SK-N-SH (cell line): ENCODE measurements at regions of chr12 and their contacts with region 1.

Region 1: DNA sequence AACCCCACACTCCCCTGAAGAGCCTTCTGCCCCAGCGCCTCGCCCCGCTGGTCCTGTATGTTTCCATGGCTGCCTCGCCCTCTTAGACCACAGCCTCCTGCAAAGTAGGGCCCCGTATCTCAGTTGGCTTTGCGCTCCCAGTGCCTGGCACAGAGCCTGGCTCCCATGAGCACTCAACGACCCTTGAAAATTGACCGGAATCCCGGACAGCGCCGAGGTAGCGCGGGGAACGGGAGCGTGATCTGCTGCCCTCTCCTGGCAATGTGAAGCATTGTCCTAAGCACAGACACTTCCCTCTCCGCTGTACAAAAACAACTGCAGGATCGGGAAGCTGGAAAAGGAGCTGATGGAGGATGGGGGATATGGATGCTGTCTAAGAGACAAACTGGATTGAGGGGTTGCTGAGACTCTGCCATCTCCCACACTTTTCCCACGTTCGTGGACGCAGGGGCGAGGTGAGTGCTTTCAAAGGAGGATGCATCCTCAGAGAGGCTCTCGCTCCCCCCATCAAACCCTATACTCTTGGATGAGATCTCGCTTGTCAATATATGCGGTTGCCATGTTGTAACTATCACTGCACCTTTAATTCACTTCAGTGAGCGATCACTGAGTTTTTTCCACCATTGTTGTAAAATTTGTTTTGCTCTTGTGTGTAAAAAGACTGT is 10.7 kb upstream of the FKBP4 start:
- DNase-seq: peak; percentile 83
- H3K4me3 ChIP-seq: peak overlapping the region in 1 of 2 experiments; percentile 24; a peak in 1 of 4 replicates
- H3K27ac ChIP-seq: no peak overlapping the region
- H3K4me1 ChIP-seq: peaks cover 0 to 4% of the 10 kb centered on the region in 2 experiments; a peak in 1 of 4 replicates
- H3K27me3 ChIP-seq: no peaks in the 10 kb centered on the region; the same call in 1 of the 2 replicates
- CTCF ChIP-seq: peak; percentile 84
- EP300 ChIP-seq: no peak
- RAD21 ChIP-seq: peak; percentile 74

Region 2: DNA sequence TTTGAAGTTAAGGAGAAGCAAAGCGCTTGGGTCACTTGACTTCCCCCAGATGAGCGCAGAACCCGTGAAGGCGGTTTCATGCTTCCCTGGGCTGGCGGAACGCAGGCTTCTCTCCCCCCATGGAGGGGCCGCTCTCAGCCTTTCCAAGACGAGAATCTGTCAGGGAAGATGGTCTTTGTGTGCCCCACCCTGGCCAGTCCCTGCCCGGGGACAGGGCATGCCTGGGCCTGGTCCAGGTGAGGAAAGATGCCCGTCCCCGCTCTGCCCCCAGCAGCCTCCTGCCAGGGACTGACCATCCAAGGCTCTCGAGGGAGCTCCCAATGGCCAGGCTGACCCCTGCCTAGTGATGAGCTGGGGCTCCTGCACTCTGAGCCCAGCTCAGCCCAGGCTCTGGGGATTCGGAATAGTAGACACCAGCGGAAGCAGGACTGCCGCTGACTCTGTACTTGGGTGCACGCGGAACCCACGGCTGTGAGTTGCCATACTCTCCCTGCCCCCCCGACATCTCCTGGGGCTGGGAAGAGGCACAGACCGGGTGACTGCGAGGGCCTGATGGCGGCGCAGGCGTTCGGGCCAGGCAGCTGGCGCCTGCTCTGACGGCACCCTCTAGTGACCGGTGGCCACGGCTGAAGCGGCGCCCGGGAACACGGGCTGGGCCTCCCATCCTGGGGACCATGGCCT is 131.5 kb before region 1 on chr12:
- CTCF ChIA-PET with region 1: no interaction called
- POLR2A ChIA-PET with region 1: no interaction called
- DNase-seq: peak; percentile 41
- H3K4me3 ChIP-seq: no peak overlapping the region
- H3K27ac ChIP-seq: no peak overlapping the region
- H3K4me1 ChIP-seq: no peaks in the 10 kb centered on the region; a peak in 1 of 4 replicates
- H3K27me3 ChIP-seq: no peaks in the 10 kb centered on the region
- CTCF ChIP-seq: peak; percentile 15; the same call in 1 of the 2 replicates
- EP300 ChIP-seq: no peak
- RAD21 ChIP-seq: peak; percentile 21; the same call in 1 of the 2 replicates

Region 3: GRCh38 chr12:2697057-2697800 is 86.8 kb before region 1 on chr12:
- CTCF ChIA-PET with region 1: no interaction called
- POLR2A ChIA-PET with region 1: no interaction called
- DNase-seq: no peak
- H3K4me3 ChIP-seq: no peak overlapping the region
- H3K27ac ChIP-seq: no peak overlapping the region
- H3K4me1 ChIP-seq: no peaks in the 10 kb centered on the region
- H3K27me3 ChIP-seq: no peaks in the 10 kb centered on the region
- CTCF ChIP-seq: no peak
- EP300 ChIP-seq: no peak
- RAD21 ChIP-seq: no peak

Region 4: GRCh38 chr12:2733477-2734355 is 50.4 kb before region 1 on chr12:
- CTCF ChIA-PET with region 1: interaction called, 80 read pairs
- POLR2A ChIA-PET with region 1: no interaction called
- DNase-seq: no peak
- H3K4me3 ChIP-seq: no peak overlapping the region
- H3K27ac ChIP-seq: no peak overlapping the region
- H3K4me1 ChIP-seq: no peaks in the 10 kb centered on the region
- H3K27me3 ChIP-seq: peaks cover 32% of the 10 kb centered on the region
- CTCF ChIP-seq: no peak
- EP300 ChIP-seq: no peak
- RAD21 ChIP-seq: no peak

Region 5: DNA sequence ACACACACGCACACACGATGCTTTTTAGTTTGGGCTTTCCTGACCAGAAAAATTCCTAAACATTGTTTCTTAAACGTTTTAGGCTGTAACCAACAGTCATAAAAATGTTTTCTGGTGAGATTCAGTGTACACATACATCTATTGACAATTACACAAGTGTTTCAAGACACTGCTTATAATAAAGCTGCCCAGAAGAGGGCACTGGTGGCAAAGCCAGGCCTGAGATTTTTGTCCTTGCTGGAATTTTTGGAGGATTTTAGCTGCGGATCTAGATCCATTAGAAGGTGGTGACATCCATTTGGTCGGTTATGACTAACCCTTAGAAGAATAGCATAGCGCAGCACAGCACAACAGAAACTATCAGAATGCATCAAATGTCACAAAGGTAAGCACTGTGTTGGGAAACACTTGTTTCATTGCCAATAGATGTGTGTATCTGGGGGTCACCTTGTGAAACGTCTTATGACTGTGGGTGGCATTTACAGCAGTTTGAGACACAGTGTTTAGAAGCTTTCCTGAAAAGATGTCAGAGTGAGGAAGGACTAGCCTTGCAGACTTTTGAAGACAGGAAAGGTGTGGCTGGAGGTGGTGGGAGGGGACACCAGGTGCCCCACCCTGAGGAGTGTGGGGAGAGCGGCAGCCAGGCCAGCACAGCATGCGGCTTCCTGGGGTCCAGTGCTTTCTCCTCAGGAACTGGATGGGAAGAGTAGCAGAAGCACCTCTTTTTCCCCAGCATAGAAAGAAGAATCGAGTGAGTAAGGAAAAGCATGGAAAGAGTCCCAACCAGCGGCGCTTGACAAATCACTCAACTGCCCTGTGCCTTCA is 44.0 kb before region 1 on chr12:
- CTCF ChIA-PET with region 1: interaction called, 80 read pairs
- POLR2A ChIA-PET with region 1: no interaction called
- DNase-seq: peak; percentile 46
- H3K4me3 ChIP-seq: no peak overlapping the region
- H3K27ac ChIP-seq: no peak overlapping the region
- H3K4me1 ChIP-seq: no peaks in the 10 kb centered on the region
- H3K27me3 ChIP-seq: peaks cover 22% of the 10 kb centered on the region
- CTCF ChIP-seq: peak; percentile 73
- EP300 ChIP-seq: no peak
- RAD21 ChIP-seq: peak; percentile 86

Region 6: DNA sequence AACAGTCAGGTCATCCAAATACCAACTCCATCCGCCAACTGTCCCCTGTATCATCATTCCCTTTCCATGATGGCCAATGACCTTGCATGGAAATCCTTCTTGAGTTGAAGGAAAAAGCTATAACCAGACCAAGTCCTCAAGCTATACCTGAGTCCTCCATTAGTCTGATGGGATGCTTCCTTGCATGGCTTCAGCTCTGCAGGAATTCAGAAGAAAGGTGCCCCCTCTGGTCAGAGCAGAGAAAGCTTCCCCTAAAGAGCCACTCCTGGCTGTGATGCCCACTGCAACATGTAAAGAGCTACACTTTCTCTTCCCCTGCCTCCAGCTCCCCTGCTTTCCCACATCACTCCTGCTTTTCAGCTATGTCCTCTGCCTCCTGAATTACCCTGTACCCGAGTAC is 32.4 kb before region 1 on chr12:
- CTCF ChIA-PET with region 1: interaction called, 15 read pairs
- POLR2A ChIA-PET with region 1: no interaction called
- DNase-seq: peak; percentile 32
- H3K4me3 ChIP-seq: no peak overlapping the region
- H3K27ac ChIP-seq: no peak overlapping the region
- H3K4me1 ChIP-seq: peaks cover 0 to 3% of the 10 kb centered on the region in 2 experiments; a peak in 2 of 4 replicates
- H3K27me3 ChIP-seq: no peaks in the 10 kb centered on the region; the same call in 1 of the 2 replicates
- CTCF ChIP-seq: no peak
- EP300 ChIP-seq: no peak
- RAD21 ChIP-seq: no peak

Region 7: DNA sequence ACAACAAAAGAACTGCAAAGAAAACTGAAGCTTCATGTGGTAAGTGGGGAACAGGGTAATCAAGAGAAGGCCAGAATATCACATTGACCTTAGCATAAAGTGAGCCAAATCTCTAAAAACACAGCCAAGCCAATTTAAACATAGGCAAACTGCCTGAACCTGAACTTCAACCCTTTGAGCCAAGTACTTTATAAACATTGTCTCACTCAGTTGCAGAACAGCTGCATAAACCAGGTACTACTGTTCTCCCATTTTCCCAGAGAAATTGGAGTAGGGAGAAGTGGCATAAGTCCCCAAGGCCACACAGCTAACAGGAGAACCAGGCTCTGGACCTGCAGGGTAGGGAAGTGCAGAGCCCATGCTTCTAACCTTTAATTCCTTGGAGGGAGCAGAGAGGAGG is 19.7 kb before region 1 on chr12:
- CTCF ChIA-PET with region 1: interaction called, 18 read pairs
- POLR2A ChIA-PET with region 1: no interaction called
- DNase-seq: no peak
- H3K4me3 ChIP-seq: no peak overlapping the region
- H3K27ac ChIP-seq: no peak overlapping the region
- H3K4me1 ChIP-seq: no peaks in the 10 kb centered on the region
- H3K27me3 ChIP-seq: no peaks in the 10 kb centered on the region
- CTCF ChIP-seq: no peak
- EP300 ChIP-seq: no peak
- RAD21 ChIP-seq: no peak

Region 8: DNA sequence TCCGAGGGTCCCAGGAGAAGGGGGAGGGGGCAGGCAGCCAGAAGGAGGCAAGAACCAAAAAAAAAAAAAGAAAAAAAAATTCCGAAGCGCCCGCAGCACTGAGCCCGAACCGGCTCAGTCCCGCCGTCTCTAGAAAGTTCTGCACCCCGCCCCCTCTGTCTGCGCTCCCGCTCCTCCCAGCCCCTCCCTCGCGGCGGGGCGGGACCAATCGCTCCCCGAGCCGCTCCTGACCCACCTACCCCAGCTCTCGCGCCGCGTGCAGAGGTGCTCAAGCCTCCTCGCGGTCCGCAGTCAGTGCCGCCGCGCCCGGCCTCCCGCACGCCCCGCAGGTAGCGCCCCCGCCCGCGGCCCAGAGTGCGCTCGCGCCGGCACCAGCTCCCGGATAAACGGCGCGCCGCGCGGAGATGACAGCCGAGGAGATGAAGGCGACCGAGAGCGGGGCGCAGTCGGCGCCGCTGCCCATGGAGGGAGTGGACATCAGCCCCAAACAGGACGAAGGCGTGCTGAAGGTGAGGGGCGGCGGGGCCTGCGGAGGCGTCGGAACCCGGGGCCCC is 10.7 kb after region 1 on chr12 and contains the start of gene FKBP4:
- CTCF ChIA-PET with region 1: interaction called, 54 read pairs
- POLR2A ChIA-PET with region 1: interaction called, 3 read pairs
- DNase-seq: peak; percentile 98
- H3K4me3 ChIP-seq: peak within 1 kb of the TSS; percentile 77 to 84
- H3K27ac ChIP-seq: peak within 1 kb of the TSS in 1 of 2 experiments; percentile 76; a peak in 2 of 4 replicates
- H3K4me1 ChIP-seq: peaks cover 0 to 23% of the 10 kb centered on the region in 2 experiments; a peak in 3 of 4 replicates
- H3K27me3 ChIP-seq: no peaks in the 10 kb centered on the region
- CTCF ChIP-seq: no peak
- EP300 ChIP-seq: peak in 1 of 2 experiments; percentile 58; a peak in 2 of 4 replicates
- RAD21 ChIP-seq: no peak
- polyA plus RNA-seq, gene FKBP4: 53.2 and 57.7 TPM in 2 replicates

Region 9: DNA sequence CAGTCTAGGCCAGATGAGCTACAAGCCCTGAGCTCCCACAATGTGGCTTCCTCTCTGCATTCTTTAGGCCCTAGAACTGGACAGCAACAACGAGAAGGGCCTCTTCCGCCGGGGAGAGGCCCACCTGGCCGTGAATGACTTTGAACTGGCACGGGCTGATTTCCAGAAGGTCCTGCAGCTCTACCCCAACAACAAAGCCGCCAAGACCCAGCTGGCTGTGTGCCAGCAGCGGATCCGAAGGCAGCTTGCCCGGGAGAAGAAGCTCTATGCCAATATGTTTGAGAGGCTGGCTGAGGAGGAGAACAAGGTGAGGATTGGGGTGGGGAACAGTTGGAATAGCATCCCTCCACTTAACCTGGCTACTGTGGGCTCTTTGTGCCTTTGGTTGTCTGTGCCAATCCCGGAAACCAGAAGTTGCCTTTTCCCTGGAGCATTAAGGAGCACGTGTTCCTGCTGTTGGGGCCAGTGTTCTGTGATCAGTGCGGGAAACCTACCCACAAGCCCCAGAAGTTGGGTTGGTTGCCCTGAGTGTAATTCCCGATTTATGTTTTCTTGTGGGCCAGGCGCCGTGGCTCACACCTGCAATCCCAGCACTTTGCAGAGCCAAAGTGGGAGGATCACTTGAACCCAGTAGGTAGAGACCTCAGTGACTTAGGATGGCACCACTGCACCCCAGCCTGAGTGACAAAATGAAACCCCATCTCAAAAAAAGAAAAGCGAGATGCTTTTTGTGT is 17.1 kb after region 1 on chr12:
- CTCF ChIA-PET with region 1: interaction called, 54 read pairs
- POLR2A ChIA-PET with region 1: no interaction called
- DNase-seq: no peak
- H3K4me3 ChIP-seq: no peak overlapping the region
- H3K27ac ChIP-seq: no peak overlapping the region; a peak in 1 of 4 replicates
- H3K4me1 ChIP-seq: peaks cover 0 to 21% of the 10 kb centered on the region in 2 experiments; a peak in 3 of 4 replicates
- H3K27me3 ChIP-seq: no peaks in the 10 kb centered on the region
- CTCF ChIP-seq: no peak
- EP300 ChIP-seq: no peak
- RAD21 ChIP-seq: no peak

Region 10: GRCh38 chr12:3071107-3071506 is 287.0 kb after region 1 on chr12:
- CTCF ChIA-PET with region 1: no interaction called
- POLR2A ChIA-PET with region 1: no interaction called
- DNase-seq: no peak
- H3K4me3 ChIP-seq: no peak overlapping the region
- H3K27ac ChIP-seq: no peak overlapping the region
- H3K4me1 ChIP-seq: peaks cover 0 to 3% of the 10 kb centered on the region in 2 experiments; a peak in 1 of 4 replicates
- H3K27me3 ChIP-seq: no peaks in the 10 kb centered on the region
- CTCF ChIP-seq: no peak
- EP300 ChIP-seq: no peak
- RAD21 ChIP-seq: no peak

Region 11: DNA sequence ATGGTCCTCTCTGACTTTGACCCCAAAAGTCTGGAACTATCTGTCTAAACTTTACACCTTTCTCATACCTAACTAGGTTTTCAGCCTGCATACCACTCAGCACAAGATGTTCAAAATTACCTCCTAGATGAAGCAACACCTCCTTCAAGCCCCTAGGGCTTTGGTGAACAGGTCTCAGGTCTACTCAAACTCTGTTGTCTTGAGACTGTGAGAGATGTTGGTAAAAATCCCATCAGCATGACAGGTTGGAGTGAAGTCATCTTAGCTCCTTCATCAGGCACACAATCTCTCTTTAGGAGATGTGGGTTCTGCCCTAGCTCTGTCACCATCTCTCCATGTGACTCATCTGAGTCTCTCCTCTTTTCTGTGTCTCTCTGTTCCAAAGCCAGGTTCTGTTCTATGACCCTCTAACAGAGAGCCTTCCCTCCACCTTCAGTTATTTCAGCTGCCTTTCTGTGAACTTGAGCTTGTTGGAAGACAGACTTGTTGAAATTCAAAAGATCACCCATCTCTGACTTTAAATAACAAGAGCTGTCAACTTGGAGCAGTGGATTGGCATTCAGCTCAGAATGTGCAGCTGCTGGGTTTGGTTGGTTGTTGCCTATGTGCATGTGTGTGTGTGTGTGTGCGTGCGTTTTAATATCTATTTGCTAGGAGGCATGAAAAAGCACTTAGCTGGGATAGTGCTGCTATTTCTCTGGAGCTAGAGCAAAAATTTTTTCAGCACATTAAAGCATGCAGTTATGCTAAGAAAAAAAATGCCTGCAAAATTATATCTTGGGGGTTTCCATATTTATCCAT is 838.2 kb after region 1 on chr12:
- CTCF ChIA-PET with region 1: no interaction called
- POLR2A ChIA-PET with region 1: no interaction called
- DNase-seq: no peak
- H3K4me3 ChIP-seq: no peak overlapping the region
- H3K27ac ChIP-seq: no peak overlapping the region
- H3K4me1 ChIP-seq: peaks cover 0 to 4% of the 10 kb centered on the region in 2 experiments; a peak in 1 of 4 replicates
- H3K27me3 ChIP-seq: no peaks in the 10 kb centered on the region; the same call in 1 of the 2 replicates
- CTCF ChIP-seq: no peak
- EP300 ChIP-seq: no peak
- RAD21 ChIP-seq: no peak